Activated T-helper 2 cell treated with anti-CD3 and anti-CD28 coated beads, Interferon-gamma antibody, Interleukin-2, Interleukin-4, amounts not matched to agents 10 μg/mL and 5 μg/mL and 100 μg/mL, durations not matched to agents 14 hours and 24 hours and 36 hours (primary cell): ENCODE measurements at regions of chr6 and their contacts with region 1.

Region 1: DNA sequence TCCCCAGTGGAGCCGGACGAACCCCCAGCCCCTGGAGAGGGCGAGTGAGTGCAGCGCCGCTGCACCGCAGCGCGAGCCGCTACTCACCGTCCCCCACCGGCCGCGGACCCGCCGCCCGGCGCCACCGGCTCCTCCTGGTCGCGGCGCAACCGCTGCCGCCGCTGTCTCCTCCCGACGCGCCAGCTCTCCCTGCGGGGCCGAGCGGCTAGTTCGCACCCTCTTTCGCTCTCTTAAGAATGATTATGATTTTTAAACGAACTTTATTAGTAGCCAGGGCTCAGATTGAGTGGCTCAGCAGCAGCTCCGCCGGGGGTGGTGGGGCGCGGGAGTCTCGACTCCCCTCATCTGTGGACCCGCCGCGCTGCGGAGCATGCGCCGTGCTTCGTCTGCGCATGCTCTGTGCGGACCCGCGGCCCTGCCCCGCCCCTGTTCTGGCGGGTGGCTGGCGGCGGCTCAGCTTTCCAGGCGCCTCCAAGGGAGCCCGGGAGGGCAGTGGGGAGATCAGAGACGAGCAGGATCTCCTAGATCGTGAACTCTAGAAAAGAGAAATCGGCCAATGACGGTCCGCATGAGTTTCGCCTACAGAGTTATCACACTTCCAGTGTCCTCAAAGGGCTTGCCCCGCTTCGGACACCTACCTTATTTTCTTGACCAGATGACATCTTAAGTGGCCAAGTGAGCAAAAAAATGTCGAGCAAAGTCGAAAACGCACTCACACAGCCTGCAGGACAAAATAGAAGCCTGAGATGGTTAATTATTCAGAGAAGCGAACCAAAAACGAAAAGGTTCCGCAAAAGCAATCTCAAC is at the start of gene RAB23:
- DNase-seq: peak; percentile 82
- H3K4me3 Mint-ChIP-seq: peak within 1 kb of the TSS; percentile 99
- H3K27ac Mint-ChIP-seq: peak within 1 kb of the TSS; percentile 97
- H3K4me1 Mint-ChIP-seq: peaks cover 26% of the 10 kb centered on the region
- H3K27me3 Mint-ChIP-seq: peaks cover 27% of the 10 kb centered on the region
- total RNA-seq, gene RAB23: 4.8 and 5.1 TPM in 2 replicates

Region 2: DNA sequence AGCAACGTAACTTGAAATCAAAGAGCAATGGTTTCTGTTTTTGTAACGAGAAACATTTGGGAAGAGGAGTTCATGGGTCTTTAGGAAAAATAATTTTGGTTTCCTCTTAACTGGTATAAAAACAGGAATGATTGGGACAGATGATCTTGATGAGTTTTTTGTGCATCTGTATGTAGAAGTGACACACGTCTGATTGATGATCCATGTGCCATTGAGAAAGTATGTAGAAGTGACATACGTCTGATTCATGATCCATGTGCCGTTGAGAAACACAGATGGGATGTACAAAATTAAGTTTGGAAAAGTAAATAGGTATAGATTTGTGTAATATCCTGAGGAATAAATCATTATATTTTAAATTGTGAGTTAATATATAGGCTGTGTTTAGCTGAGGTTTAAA is 173.6 kb before region 1 on chr6:
- intact Hi-C with region 1: loop called (anchors 5 kb)
- DNase-seq: no peak
- H3K4me3 Mint-ChIP-seq: peak overlapping the region; percentile 79
- H3K27ac Mint-ChIP-seq: peak overlapping the region; percentile 24
- H3K4me1 Mint-ChIP-seq: peaks cover 26% of the 10 kb centered on the region
- H3K27me3 Mint-ChIP-seq: peaks cover 20% of the 10 kb centered on the region

Region 3: GRCh38 chr6:57089687-57090460 is 132.3 kb before region 1 on chr6 and contains the start of gene ZNF451:
- intact Hi-C with region 1: loop called (anchors 1 kb)
- DNase-seq: peak; percentile 95
- H3K4me3 Mint-ChIP-seq: peak within 1 kb of the TSS; percentile 73
- H3K27ac Mint-ChIP-seq: peak within 1 kb of the TSS; percentile 81
- H3K4me1 Mint-ChIP-seq: peaks cover 36% of the 10 kb centered on the region
- H3K27me3 Mint-ChIP-seq: no peaks in the 10 kb centered on the region
- total RNA-seq, gene ZNF451: 57.7 and 60.3 TPM in 2 replicates

Region 4: GRCh38 chr6:57207141-57207540 is 15.0 kb before region 1 on chr6:
- intact Hi-C with region 1: loop called (anchors 1 kb)
- DNase-seq: no peak
- H3K4me3 Mint-ChIP-seq: no peak overlapping the region
- H3K27ac Mint-ChIP-seq: no peak overlapping the region
- H3K4me1 Mint-ChIP-seq: peaks cover 27% of the 10 kb centered on the region
- H3K27me3 Mint-ChIP-seq: no peaks in the 10 kb centered on the region